ENCODE measurements at regions of chr16 and their contacts with region 1.

Region 1: GRCh38 chr16:57091975-57092785 is at the start of gene CPNE2:
- DNase-seq: no peak
- H3K4me3 ChIP-seq: peak within 1 kb of the TSS; percentile 84 to 95 (median 89)
- H3K27ac ChIP-seq: peak within 1 kb of the TSS; percentile 81 to 91 (median 88)
- H3K4me1 ChIP-seq: peaks cover 17 to 42% (median 20%) of the 10 kb centered on the region in 3 donors
- H3K27me3 ChIP-seq: peaks cover 0 to 3% (median 0%) of the 10 kb centered on the region in 4 donors
- CTCF ChIP-seq: peak in 1 of 6 experiments; percentile 14
- POLR2A ChIP-seq: peak in 2 of 4 donors; percentile 41 to 55
- total RNA-seq, gene CPNE2: 12.2 to 21.4 (median 17.8) TPM

Region 2: GRCh38 chr16:57167953-57168352 is 75.8 kb after region 1 on chr16:
- intact Hi-C with region 1: loop called (anchors 5 kb)
- DNase-seq: no peak
- H3K4me3 ChIP-seq: no peak overlapping the region
- H3K27ac ChIP-seq: peak overlapping the region in 3 of 4 donors; percentile 56 to 84 (median 82)
- H3K4me1 ChIP-seq: peaks cover 8 to 31% (median 22%) of the 10 kb centered on the region in 3 donors
- H3K27me3 ChIP-seq: no peaks in the 10 kb centered on the region
- CTCF ChIP-seq: peak in 5 of 6 experiments; percentile 46 to 78 (median 60)
- POLR2A ChIP-seq: no peak

Region 3: GRCh38 chr16:57284208-57284951 is 192.2 kb after region 1 on chr16 and contains the start of gene PLLP:
- intact Hi-C with region 1: loop called (anchors 10 kb)
- DNase-seq: no peak
- H3K4me3 ChIP-seq: peak within 1 kb of the TSS; percentile 64 to 73 (median 70)
- H3K27ac ChIP-seq: peak within 1 kb of the TSS; percentile 34 to 85 (median 77)
- H3K4me1 ChIP-seq: peaks cover 13 to 59% (median 32%) of the 10 kb centered on the region in 3 donors
- H3K27me3 ChIP-seq: peaks cover 0 to 19% (median 0%) of the 10 kb centered on the region in 4 donors
- CTCF ChIP-seq: no peak
- POLR2A ChIP-seq: peak in 1 of 4 donors; percentile 27
- total RNA-seq, gene PLLP: 15.5 to 38.5 (median 31.5) TPM